ENCODE measurements at regions of chr7 and their contacts with region 1.

Region 1: DNA sequence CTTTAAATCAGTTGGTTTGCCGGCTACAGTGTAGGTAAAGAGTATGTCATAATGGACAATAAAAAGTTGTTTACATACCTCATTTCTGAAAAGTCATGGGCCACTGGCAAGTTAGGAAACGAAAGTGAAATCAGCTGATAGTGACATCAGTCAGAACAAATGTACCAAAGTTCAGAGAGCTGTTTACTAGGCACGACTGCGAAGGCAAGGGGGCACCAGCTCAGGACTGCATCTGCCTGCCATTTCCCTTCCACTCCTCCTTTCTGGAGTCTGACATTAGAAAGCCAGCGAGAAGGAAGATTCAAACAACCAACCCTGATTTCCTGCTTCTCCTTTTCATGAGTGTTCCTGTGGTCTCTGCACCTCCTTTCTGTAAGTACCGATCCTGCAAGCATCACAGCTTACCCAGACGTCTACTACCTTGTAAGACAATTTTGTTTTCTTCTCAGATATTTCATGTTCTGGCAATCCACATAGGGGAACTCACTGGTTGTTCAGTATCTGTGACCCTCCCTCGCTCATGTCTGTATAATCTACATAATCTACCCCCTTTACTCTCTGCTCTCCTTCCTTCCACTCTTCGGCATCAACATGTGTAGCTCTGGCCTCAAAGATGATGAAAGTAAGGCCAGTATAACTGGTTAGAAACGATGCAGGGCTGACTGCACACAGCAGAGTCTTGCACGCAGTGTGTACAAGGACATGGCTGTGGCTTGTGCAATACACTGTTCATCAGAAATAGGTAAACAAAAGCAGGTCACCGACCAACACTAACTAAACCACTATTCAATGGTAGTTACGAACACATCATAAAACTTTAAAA is at the start of gene TMEM140:
- DNase-seq: peak; percentile 35 to 91 (median 58)
- ATAC-seq: peak; percentile 79
- H3K4me3 ChIP-seq: peak within 1 kb of the TSS; percentile 69
- H3K4me3 Mint-ChIP-seq: peak within 1 kb of the TSS; percentile 91
- H3K27ac ChIP-seq: peak within 1 kb of the TSS; percentile 87 to 89
- H3K27ac Mint-ChIP-seq: peak within 1 kb of the TSS; percentile 98
- H3K4me1 ChIP-seq: peaks cover 32% of the 10 kb centered on the region
- H3K4me1 Mint-ChIP-seq: peaks cover 81% of the 10 kb centered on the region
- H3K27me3 ChIP-seq: no peaks in the 10 kb centered on the region
- H3K27me3 Mint-ChIP-seq: no peaks in the 10 kb centered on the region
- CTCF ChIP-seq: no peak
- total RNA-seq, gene TMEM140: 27.7 to 32.2 TPM

Region 2: GRCh38 chr7:134654104-134654775 is 493.9 kb before region 1 on chr7:
- CTCF ChIA-PET with region 1: no interaction called
- POLR2A ChIA-PET with region 1: no interaction called
- intact Hi-C with region 1: loop called (anchors 5 to 10 kb)
- DNase-seq: no peak
- ATAC-seq: no peak
- H3K4me3 ChIP-seq: no peak overlapping the region
- H3K4me3 Mint-ChIP-seq: no peak overlapping the region
- H3K27ac ChIP-seq: no peak overlapping the region
- H3K27ac Mint-ChIP-seq: no peak overlapping the region
- H3K4me1 ChIP-seq: no peaks in the 10 kb centered on the region
- H3K4me1 Mint-ChIP-seq: peaks cover 76% of the 10 kb centered on the region
- H3K27me3 ChIP-seq: no peaks in the 10 kb centered on the region
- H3K27me3 Mint-ChIP-seq: no peaks in the 10 kb centered on the region
- CTCF ChIP-seq: no peak

Region 3: GRCh38 chr7:134865001-134865845 is 282.9 kb before region 1 on chr7:
- CTCF ChIA-PET with region 1: no interaction called
- POLR2A ChIA-PET with region 1: interaction called, 5 read pairs
- intact Hi-C with region 1: loop called in 1 of 2 experiments (anchors 5 kb)
- DNase-seq: peak in 12 of 14 experiments; percentile 4 to 68 (median 29)
- ATAC-seq: peak; percentile 86
- H3K4me3 ChIP-seq: peak overlapping the region; percentile 46
- H3K4me3 Mint-ChIP-seq: peak overlapping the region; percentile 63
- H3K27ac ChIP-seq: peak overlapping the region; percentile 33 to 61
- H3K27ac Mint-ChIP-seq: peak overlapping the region; percentile 90
- H3K4me1 ChIP-seq: peaks cover 21% of the 10 kb centered on the region
- H3K4me1 Mint-ChIP-seq: peaks cover 50% of the 10 kb centered on the region
- H3K27me3 ChIP-seq: no peaks in the 10 kb centered on the region
- H3K27me3 Mint-ChIP-seq: no peaks in the 10 kb centered on the region
- CTCF ChIP-seq: no peak

Region 4: GRCh38 chr7:134986363-134987251 is 161.5 kb before region 1 on chr7 and contains the start of gene AGBL3:
- CTCF ChIA-PET with region 1: interaction called, 15 read pairs
- POLR2A ChIA-PET with region 1: interaction called, 70 read pairs
- intact Hi-C with region 1: loop called (anchors 1 to 5 kb)
- DNase-seq: peak; percentile 79 to 93 (median 85)
- ATAC-seq: peak; percentile 91
- H3K4me3 ChIP-seq: peak within 1 kb of the TSS; percentile 90
- H3K4me3 Mint-ChIP-seq: peak within 1 kb of the TSS; percentile 97
- H3K27ac ChIP-seq: peak within 1 kb of the TSS; percentile 89 to 92
- H3K27ac Mint-ChIP-seq: peak within 1 kb of the TSS; percentile 94
- H3K4me1 ChIP-seq: no peaks in the 10 kb centered on the region
- H3K4me1 Mint-ChIP-seq: peaks cover 46% of the 10 kb centered on the region
- H3K27me3 ChIP-seq: no peaks in the 10 kb centered on the region
- H3K27me3 Mint-ChIP-seq: no peaks in the 10 kb centered on the region
- CTCF ChIP-seq: peak; percentile 85
- total RNA-seq, gene AGBL3: 2.2 to 2.5 TPM

Region 5: GRCh38 chr7:134992626-134993179 is 155.4 kb before region 1 on chr7:
- CTCF ChIA-PET with region 1: interaction called, 15 read pairs
- POLR2A ChIA-PET with region 1: interaction called, 70 read pairs
- intact Hi-C with region 1: loop called in 1 of 2 experiments (anchors 5 kb)
- DNase-seq: peak in 3 of 14 experiments; percentile 6 to 19 (median 10)
- ATAC-seq: peak; percentile 54
- H3K4me3 ChIP-seq: no peak overlapping the region
- H3K4me3 Mint-ChIP-seq: no peak overlapping the region
- H3K27ac ChIP-seq: no peak overlapping the region
- H3K27ac Mint-ChIP-seq: peak overlapping the region; percentile 35
- H3K4me1 ChIP-seq: peaks cover 9% of the 10 kb centered on the region
- H3K4me1 Mint-ChIP-seq: peaks cover 72% of the 10 kb centered on the region
- H3K27me3 ChIP-seq: no peaks in the 10 kb centered on the region
- H3K27me3 Mint-ChIP-seq: no peaks in the 10 kb centered on the region
- CTCF ChIP-seq: no peak

Region 6: DNA sequence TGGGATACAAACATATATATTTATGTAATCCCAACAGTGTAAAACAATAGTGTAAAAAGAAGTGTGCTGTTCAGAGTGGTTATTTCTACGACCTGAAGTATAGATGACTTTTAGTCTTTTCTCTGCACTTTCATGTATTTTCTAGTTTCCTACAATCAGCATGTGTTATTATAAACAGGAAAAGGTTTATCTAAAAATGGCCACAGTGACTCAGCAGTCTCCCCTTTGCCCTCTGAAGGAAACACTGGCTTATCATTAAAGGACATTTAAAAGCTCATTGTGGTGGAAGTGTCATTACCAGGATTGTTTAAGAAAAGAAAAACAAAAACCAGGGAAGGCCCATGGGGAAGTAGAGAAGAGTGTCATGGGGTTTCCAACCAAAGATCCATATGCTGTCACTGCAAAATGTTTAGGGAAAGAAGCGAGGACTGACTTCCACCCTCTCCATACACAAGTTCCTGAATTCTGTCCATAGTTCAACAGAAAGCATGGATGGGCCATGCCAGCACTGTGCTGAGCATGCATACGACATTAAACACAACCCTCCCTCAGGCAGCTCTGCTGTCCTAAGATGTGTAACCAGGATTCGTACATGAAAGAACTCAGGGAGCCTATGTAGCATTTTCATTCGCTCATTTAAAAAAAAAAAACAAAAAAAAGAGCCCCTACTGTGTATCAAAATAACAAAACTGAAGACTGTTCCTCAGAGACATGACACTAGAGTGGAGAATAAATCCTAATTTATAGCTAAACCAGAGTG is 12.2 kb after region 1 on chr7:
- CTCF ChIA-PET with region 1: interaction called, 3 read pairs
- POLR2A ChIA-PET with region 1: interaction called, 35 read pairs
- intact Hi-C with region 1: no loop called
- DNase-seq: peak in 1 of 14 experiments; percentile 47
- ATAC-seq: no peak
- H3K4me3 ChIP-seq: no peak overlapping the region
- H3K4me3 Mint-ChIP-seq: no peak overlapping the region
- H3K27ac ChIP-seq: no peak overlapping the region
- H3K27ac Mint-ChIP-seq: peak overlapping the region; percentile 29
- H3K4me1 ChIP-seq: peaks cover 32% of the 10 kb centered on the region
- H3K4me1 Mint-ChIP-seq: peaks cover 34% of the 10 kb centered on the region
- H3K27me3 ChIP-seq: no peaks in the 10 kb centered on the region
- H3K27me3 Mint-ChIP-seq: no peaks in the 10 kb centered on the region
- CTCF ChIP-seq: no peak

Region 7: DNA sequence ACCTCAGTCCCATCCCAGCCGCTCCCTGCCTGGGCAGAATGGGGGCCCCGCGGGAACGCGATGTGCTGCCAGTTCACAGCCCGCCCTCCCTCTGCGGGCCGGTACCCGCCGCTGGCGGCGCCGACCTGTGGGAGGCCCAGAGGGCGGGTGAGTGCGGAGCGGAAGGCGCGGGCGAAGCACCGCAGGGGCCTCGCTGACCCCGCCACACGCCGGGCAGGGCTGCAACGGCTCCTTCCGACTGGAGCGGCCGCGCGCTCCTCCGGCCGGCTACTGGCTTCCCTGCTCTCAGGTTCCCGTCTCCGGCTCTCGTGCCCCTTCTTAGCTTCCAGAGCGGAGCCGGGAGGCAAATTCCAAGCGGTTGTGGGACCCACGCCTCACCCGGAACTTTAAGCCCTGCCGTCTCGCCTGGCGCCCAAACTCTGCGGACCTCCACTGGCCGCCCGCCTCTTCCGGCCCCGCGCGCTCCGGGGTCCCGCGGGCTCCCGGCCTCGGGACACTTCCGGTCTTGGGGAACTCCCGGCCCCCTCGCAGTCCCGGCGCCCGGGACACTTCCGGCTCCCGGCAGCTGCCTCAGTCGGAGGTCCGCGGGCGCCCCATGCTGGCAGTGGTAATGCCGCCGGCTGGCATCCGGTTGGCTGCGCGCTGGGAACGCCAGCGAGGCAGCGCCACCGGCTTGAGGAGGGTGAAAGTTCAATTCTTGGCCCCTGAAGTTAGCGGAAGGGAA is 22.3 kb after region 1 on chr7 and contains the start of gene CYREN:
- CTCF ChIA-PET with region 1: interaction called, 53 read pairs
- POLR2A ChIA-PET with region 1: interaction called, 111 read pairs
- intact Hi-C with region 1: loop called (anchors 1 to 2 kb)
- DNase-seq: peak; percentile 75 to 95 (median 87)
- ATAC-seq: peak; percentile 77
- H3K4me3 ChIP-seq: peak within 1 kb of the TSS; percentile 82
- H3K4me3 Mint-ChIP-seq: peak within 1 kb of the TSS; percentile 91
- H3K27ac ChIP-seq: peak within 1 kb of the TSS; percentile 94
- H3K27ac Mint-ChIP-seq: peak within 1 kb of the TSS; percentile 94
- H3K4me1 ChIP-seq: peaks cover 47% of the 10 kb centered on the region
- H3K4me1 Mint-ChIP-seq: peaks cover 48% of the 10 kb centered on the region
- H3K27me3 ChIP-seq: no peaks in the 10 kb centered on the region
- H3K27me3 Mint-ChIP-seq: no peaks in the 10 kb centered on the region
- CTCF ChIP-seq: peak; percentile 76
- total RNA-seq, gene CYREN: 14.0 to 15.8 TPM

Region 8: DNA sequence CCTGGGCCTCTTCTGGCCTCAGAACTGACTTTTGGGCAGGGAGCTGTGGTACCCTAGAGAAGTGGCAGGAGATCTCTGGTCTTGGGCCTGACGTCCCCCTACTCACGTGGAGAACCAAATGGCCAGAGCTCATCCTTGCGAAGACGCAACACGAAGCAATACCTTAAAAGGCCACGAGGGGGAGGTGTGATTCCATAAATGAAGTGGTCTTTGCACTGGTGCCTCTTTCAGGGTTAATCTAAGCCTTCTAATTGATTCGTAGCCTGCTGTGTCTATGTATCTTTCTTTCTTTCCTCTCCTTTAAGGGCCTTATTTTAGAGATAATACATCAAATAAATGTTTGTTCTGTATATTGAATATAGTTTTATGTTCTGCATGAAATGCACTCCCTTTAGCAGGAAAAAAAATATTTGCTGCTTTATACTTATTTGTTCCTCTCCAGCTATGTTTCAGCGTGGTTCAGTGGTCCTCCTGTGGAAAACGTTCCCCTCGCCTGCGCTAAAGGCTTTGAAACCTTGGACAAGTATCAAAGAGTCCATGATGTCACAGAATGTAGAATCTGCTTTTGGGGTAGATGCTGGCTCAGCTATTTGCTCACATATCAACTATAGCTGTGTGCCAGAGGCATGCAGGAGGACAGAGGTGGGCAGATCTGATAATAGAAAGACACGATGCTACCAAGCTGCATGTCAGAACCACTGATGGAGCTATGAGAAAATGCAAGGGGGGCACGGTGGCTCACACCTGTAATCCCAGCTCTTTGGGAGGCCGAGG is 126.6 kb after region 1 on chr7:
- CTCF ChIA-PET with region 1: no interaction called
- POLR2A ChIA-PET with region 1: no interaction called
- intact Hi-C with region 1: no loop called
- DNase-seq: peak; percentile 51 to 80 (median 66)
- ATAC-seq: peak; percentile 82
- H3K4me3 ChIP-seq: no peak overlapping the region
- H3K4me3 Mint-ChIP-seq: no peak overlapping the region
- H3K27ac ChIP-seq: no peak overlapping the region
- H3K27ac Mint-ChIP-seq: no peak overlapping the region
- H3K4me1 ChIP-seq: no peaks in the 10 kb centered on the region
- H3K4me1 Mint-ChIP-seq: no peaks in the 10 kb centered on the region
- H3K27me3 ChIP-seq: peaks cover 0 to 3% of the 10 kb centered on the region in 2 experiments
- H3K27me3 Mint-ChIP-seq: peaks cover 3% of the 10 kb centered on the region
- CTCF ChIP-seq: peak; percentile 97

Measured in CD4-positive, alpha-beta T cell (primary cell).